Testis (tissue), 5 donors: ENCODE measurements at regions of chr2 and their contacts with region 1.

Region 1: DNA sequence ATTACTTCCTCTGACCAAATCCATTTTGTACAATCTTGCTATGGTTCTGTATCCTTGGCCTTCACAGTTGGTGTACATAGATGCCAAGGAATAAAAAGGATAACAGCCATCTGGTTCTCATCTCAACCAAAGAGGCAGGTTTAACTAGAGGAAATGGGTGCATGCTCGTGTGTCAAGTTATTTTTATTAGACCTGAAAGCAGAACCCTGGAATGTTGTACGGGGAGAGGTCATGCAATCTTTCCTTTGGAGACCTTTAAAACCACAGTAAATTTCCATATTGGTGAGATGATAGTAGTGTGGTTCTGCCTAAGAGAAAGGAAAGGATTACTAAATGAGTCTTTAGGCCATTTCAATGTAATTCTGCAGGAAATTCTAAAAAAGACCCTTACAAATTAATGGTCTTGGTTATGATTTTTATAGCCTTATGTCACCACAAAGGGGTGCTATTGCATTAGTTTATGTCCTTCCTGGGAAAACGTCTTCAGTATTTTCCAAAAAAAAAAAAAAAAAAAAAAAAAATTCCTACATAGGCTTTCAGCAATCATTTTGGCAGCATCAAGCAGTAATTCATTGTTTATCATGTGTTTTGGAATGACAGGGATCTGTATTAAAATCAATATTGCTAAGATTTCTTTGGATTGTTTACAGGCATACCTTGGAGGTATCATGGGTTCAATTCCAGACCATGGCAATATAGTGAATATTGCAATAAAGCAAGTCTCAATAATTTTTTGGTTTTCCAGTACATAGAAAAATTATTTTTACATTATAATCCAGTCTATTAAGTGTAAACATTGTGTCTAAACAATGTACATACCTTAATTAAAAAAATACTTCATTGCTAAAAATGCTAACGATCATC is 270.8 kb downstream of the NYAP2 start:
- DNase-seq: no peak
- H3K4me3 ChIP-seq: no peak overlapping the region
- H3K27ac ChIP-seq: no peak overlapping the region
- H3K4me1 ChIP-seq: no peaks in the 10 kb centered on the region
- H3K27me3 ChIP-seq: no peaks in the 10 kb centered on the region
- CTCF ChIP-seq: peak in 2 of 3 experiments; percentile 6 to 32
- POLR2A ChIP-seq: no peak

Region 2: DNA sequence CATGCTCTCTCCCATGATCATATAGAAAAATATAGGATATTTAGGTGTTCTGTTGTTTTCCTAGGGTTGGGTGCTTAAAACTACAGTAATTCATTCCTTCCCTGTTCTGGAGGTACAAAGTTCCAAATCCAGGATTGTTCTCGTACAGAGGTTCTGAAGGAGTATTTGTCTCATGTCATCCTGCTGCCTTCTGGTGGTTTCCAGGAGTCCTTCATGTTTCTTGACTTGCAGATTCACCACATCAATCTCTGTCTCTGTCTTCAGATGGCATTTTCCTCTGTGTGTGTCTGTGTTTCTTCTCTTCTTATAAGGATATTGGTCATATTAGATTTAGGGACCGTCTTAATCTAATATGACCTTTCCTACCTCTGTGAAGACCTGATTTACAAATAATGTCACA is 127.1 kb after region 1 on chr2:
- intact Hi-C with region 1: loop called (anchors 10 kb)
- DNase-seq: no peak
- H3K4me3 ChIP-seq: no peak overlapping the region
- H3K27ac ChIP-seq: no peak overlapping the region
- H3K4me1 ChIP-seq: no peaks in the 10 kb centered on the region
- H3K27me3 ChIP-seq: no peaks in the 10 kb centered on the region
- CTCF ChIP-seq: peak in 1 of 3 experiments; percentile 12
- POLR2A ChIP-seq: no peak